H1 (cell line): ENCODE measurements at regions of chr1 and their contacts with region 1.

Region 1: DNA sequence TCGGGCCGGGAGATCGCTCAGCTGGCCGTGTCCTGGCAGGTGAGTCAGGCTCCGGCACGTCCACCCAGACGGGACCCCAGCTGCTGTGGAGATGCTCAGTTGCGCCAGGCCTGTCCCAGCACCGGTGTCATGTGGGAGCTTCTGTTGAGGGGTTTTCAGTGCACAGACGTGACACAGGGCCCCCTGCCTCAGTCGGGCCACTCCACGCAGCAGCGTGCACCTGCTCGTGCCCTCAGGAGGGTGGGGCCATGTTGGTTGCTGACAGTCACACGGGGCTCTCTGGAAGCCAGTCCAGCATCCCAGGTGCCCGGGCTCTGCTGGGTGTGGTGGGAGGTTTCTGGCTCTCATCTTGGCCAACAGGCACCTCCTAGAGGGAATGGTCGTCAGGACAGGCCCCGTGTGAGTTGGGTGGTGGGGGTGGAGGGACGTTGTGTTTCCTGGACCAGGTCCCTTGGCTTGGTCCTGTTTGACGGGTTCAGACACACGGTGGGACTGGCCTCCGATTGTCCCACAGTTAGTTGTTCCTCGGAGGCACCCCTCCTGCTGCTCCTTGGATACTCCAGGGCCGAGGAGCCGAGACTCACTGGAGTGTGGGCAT is 19.2 kb downstream of the ATAD3B start:
- DNase-seq: no peak
- H3K4me3 ChIP-seq: no peak overlapping the region
- H3K27ac ChIP-seq: no peak overlapping the region
- H3K4me1 ChIP-seq: no peaks in the 10 kb centered on the region
- H3K27me3 ChIP-seq: no peaks in the 10 kb centered on the region
- CTCF ChIP-seq: no peak
- EP300 ChIP-seq: no peak
- POLR2A ChIP-seq: no peak
- RAD21 ChIP-seq: no peak

Region 2: GRCh38 chr1:1510912-1511532 is 20.3 kb after region 1 on chr1:
- CTCF ChIA-PET with region 1: interaction called, 10 read pairs
- POLR2A ChIA-PET with region 1: no interaction called
- DNase-seq: peak in 1 of 2 experiments; percentile 33
- H3K4me3 ChIP-seq: peak overlapping the region; percentile 61 to 82 (median 76)
- H3K27ac ChIP-seq: peak overlapping the region; percentile 85
- H3K4me1 ChIP-seq: no peaks in the 10 kb centered on the region; a peak in 1 of 7 replicates
- H3K27me3 ChIP-seq: no peaks in the 10 kb centered on the region
- CTCF ChIP-seq: no peak
- EP300 ChIP-seq: no peak
- POLR2A ChIP-seq: no peak
- RAD21 ChIP-seq: no peak